Tibial artery (tissue), 4 donors: ENCODE measurements at regions of chr9 and their contacts with region 1.

Region 1: GRCh38 chr9:6681147-6681956 is 35.8 kb upstream of the GLDC start:
- DNase-seq: peak; percentile 96 to 99
- H3K4me3 ChIP-seq: peak overlapping the region; percentile 68 to 79
- H3K27ac ChIP-seq: peak overlapping the region; percentile 96
- H3K4me1 ChIP-seq: peaks cover 0 to 12% (median 5%) of the 10 kb centered on the region in 4 donors
- H3K27me3 ChIP-seq: no peaks in the 10 kb centered on the region
- CTCF ChIP-seq: no peak

Region 2: DNA sequence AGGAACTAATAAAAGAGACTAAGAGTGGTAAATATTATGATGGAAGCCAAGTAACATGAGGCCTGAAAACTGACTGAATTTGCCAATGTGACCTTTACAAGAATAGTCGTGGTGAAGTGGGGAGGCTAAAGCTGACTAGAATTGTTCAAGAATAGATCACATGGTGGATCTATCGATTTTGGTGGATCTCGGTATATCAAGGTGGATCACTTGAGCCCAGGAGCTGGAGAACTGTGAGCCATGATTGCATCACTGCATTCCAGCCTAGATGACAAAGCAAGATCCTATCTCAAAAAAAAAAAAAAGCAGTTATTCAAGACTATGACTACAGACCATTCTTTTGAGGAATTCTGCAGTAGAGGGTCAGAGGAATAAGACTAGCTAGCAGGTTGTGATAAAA is 863.5 kb before region 1 on chr9:
- intact Hi-C with region 1: no loop called
- DNase-seq: no peak
- H3K4me3 ChIP-seq: no peak overlapping the region
- H3K27ac ChIP-seq: no peak overlapping the region
- H3K4me1 ChIP-seq: no peaks in the 10 kb centered on the region
- H3K27me3 ChIP-seq: no peaks in the 10 kb centered on the region
- CTCF ChIP-seq: no peak

Region 3: GRCh38 chr9:6412487-6413364 is 268.6 kb before region 1 on chr9 and contains the start of gene UHRF2:
- intact Hi-C with region 1: loop called (anchors 5 kb)
- DNase-seq: peak; percentile 99
- H3K4me3 ChIP-seq: peak within 1 kb of the TSS; percentile 93 to 96
- H3K27ac ChIP-seq: peak within 1 kb of the TSS; percentile 86 to 90
- H3K4me1 ChIP-seq: peaks cover 0 to 30% (median 16%) of the 10 kb centered on the region in 4 donors
- H3K27me3 ChIP-seq: peaks cover 0 to 4% of the 10 kb centered on the region in 2 donors
- CTCF ChIP-seq: no peak

Region 4: GRCh38 chr9:6488395-6488794 is 193.0 kb before region 1 on chr9:
- intact Hi-C with region 1: loop called (anchors 5 kb)
- DNase-seq: no peak
- H3K4me3 ChIP-seq: no peak overlapping the region
- H3K27ac ChIP-seq: no peak overlapping the region
- H3K4me1 ChIP-seq: no peaks in the 10 kb centered on the region
- H3K27me3 ChIP-seq: no peaks in the 10 kb centered on the region
- CTCF ChIP-seq: no peak

Region 5: DNA sequence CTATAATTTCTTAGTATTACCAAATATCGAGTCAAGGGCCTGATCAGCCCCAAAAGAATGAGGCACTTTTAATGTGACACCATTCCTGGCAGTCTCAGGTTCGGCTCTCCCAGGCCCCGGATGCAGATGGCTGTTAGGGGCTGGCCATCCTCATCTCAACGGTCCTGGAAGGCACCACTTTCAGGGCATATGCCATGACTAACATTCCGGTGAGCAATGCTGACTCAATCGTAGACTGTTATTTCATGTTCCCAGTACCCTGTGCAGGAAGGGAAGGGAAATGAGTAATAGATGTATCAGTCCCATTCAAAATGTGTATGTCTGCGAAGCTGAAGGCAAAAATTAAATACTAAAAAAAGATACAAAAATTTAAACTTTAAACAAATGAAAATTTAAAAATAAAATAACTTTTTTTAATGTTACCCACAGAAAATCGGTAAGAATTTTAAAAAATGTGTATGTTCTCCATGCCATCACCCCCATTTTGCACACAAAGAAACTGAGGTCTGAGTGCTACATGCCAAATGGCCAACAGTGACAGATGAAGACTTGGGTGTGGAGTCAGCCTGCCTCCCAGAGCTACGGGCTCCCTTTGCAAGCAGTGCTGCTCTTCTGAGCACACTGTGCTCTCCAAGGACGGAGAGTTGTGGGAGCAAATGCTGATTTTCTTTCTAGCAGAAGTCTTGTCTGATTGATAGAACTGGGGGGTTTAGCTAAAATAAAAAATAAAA is 114.8 kb before region 1 on chr9:
- intact Hi-C with region 1: loop called (anchors 5 kb)
- DNase-seq: peak in 1 of 2 donors; percentile 26
- H3K4me3 ChIP-seq: peak overlapping the region in 1 of 2 donors; percentile 6
- H3K27ac ChIP-seq: peak overlapping the region; percentile 43 to 69
- H3K4me1 ChIP-seq: peaks cover 0 to 42% (median 27%) of the 10 kb centered on the region in 4 donors
- H3K27me3 ChIP-seq: no peaks in the 10 kb centered on the region
- CTCF ChIP-seq: no peak

Region 6: DNA sequence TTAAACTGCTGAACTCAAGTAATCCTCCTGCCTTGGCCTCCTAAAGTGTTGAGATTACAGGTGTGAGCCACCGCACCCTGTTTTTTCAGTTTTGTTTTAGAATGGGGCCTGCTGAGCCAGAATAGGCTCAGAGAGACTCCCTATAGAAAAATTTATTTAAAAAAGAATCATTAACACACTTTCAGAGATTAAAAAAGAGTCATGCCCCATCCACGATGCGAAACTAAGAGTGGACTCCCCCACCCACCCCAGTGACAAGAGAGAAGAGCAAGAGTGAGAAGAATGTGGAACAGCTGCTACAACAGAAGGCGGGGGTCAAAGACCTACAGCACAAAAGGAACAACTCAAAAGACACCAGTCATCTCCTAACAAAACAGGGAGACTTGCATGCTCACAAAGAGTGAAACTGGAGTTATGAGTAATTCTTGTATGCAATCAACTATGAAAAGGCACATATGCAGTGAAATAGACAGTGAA is 83.1 kb before region 1 on chr9:
- intact Hi-C with region 1: no loop called
- DNase-seq: no peak
- H3K4me3 ChIP-seq: no peak overlapping the region
- H3K27ac ChIP-seq: no peak overlapping the region
- H3K4me1 ChIP-seq: no peaks in the 10 kb centered on the region
- H3K27me3 ChIP-seq: no peaks in the 10 kb centered on the region
- CTCF ChIP-seq: no peak

Region 7: GRCh38 chr9:6757456-6758247 is 76.3 kb after region 1 on chr9 and contains the start of gene KDM4C:
- intact Hi-C with region 1: loop called (anchors 2 kb)
- DNase-seq: peak; percentile 96 to 97
- H3K4me3 ChIP-seq: peak within 1 kb of the TSS; percentile 83 to 98
- H3K27ac ChIP-seq: peak within 1 kb of the TSS; percentile 93 to 99
- H3K4me1 ChIP-seq: peaks cover 0 to 14% (median 7%) of the 10 kb centered on the region in 4 donors
- H3K27me3 ChIP-seq: no peaks in the 10 kb centered on the region
- CTCF ChIP-seq: no peak

Region 8: GRCh38 chr9:6984941-6985578 is 303.7 kb after region 1 on chr9:
- intact Hi-C with region 1: no loop called
- DNase-seq: no peak
- H3K4me3 ChIP-seq: no peak overlapping the region
- H3K27ac ChIP-seq: no peak overlapping the region
- H3K4me1 ChIP-seq: no peaks in the 10 kb centered on the region
- H3K27me3 ChIP-seq: no peaks in the 10 kb centered on the region
- CTCF ChIP-seq: no peak